Esophagus muscularis mucosa (tissue), 4 donors: ENCODE measurements at regions of chr14 and their contacts with region 1.

Region 1: GRCh38 chr14:69818757-69819191 is 21.7 kb upstream of the SLC10A1 start:
- DNase-seq: no peak
- H3K4me3 ChIP-seq: no peak overlapping the region
- H3K27ac ChIP-seq: no peak overlapping the region
- H3K4me1 ChIP-seq: peaks cover 0 to 6% (median 2%) of the 10 kb centered on the region in 4 donors
- H3K27me3 ChIP-seq: peaks cover 0 to 38% (median 3%) of the 10 kb centered on the region in 4 donors
- CTCF ChIP-seq: peak; percentile 87 to 92 (median 89)
- EP300 ChIP-seq: no peak
- POLR2A ChIP-seq: no peak

Region 2: GRCh38 chr14:69855180-69855832 is 36.5 kb after region 1 on chr14:
- intact Hi-C with region 1: no loop called
- DNase-seq: no peak
- H3K4me3 ChIP-seq: no peak overlapping the region
- H3K27ac ChIP-seq: no peak overlapping the region
- H3K4me1 ChIP-seq: no peaks in the 10 kb centered on the region
- H3K27me3 ChIP-seq: peaks cover 0 to 25% (median 0%) of the 10 kb centered on the region in 4 donors
- CTCF ChIP-seq: no peak
- EP300 ChIP-seq: no peak
- POLR2A ChIP-seq: no peak

Region 3: DNA sequence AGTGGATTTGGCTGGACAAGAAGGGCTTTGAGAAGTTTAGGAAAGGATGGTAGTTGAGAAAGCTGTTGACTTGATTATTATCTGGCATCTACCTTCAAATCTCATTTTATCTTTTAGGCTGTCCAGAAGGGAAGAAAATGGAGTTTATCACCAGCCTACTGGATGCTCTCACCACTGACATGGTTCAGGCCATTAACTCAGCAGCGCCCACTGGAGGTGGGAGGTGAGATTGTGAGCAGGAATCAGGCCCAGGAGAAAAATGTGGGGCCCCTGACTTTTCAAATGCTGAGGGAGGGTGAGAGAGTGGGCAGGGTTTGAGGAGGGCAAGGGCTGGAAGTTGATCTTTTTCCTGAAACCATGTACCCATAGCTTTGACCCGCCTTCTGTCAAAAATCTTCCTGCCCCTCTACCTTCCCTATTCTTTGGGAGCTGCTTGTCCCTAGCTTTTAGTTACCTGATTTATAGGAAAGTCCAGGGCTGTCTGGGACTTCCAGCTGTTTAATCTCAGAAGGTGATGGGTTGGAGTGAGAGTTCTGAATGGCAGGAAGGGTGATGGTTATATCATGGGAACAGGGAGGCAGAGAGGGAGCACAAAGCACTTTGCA is 194.6 kb after region 1 on chr14:
- intact Hi-C with region 1: no loop called
- DNase-seq: no peak
- H3K4me3 ChIP-seq: no peak overlapping the region
- H3K27ac ChIP-seq: no peak overlapping the region
- H3K4me1 ChIP-seq: peaks cover 0 to 13% (median 11%) of the 10 kb centered on the region in 4 donors
- H3K27me3 ChIP-seq: no peaks in the 10 kb centered on the region
- CTCF ChIP-seq: peak; percentile 19 to 43 (median 20)
- EP300 ChIP-seq: no peak
- POLR2A ChIP-seq: no peak

Region 4: DNA sequence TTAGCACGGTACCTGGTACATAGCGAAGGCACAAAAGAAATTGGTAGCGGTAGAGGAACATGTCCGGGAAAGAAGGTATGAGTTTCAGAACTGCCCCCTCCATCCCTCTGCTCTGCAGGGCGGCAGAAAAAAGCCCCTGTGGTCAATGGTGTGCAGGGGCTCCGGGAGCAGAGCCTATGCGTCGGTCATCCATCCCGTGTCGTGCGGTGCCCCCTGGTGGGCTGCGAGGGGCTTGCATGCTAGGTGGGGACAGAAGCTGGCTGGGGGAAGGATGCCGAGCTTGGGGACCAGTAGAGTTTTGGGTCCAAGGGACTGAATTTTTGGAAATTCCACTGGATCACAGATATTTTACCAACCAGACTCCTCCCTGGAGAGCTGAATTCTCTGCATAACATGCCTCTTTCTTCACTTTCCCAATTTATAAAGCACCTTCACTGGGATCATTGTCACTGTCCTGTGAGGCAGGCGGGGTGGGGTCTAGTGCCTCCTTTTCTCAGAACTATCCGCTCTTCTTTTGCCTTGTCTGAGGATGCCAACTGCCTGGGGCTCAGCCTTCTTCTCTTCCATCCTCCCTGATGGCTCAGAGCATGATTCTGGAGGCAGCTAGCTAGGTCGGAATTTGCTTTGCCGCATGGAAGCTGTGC is 209.1 kb after region 1 on chr14:
- intact Hi-C with region 1: loop called (anchors 1 kb)
- DNase-seq: no peak
- H3K4me3 ChIP-seq: no peak overlapping the region
- H3K27ac ChIP-seq: no peak overlapping the region
- H3K4me1 ChIP-seq: peaks cover 0 to 5% (median 0%) of the 10 kb centered on the region in 4 donors
- H3K27me3 ChIP-seq: peaks cover 0 to 12% (median 0%) of the 10 kb centered on the region in 4 donors
- CTCF ChIP-seq: peak; percentile 89 to 93 (median 91)
- EP300 ChIP-seq: no peak
- POLR2A ChIP-seq: no peak

Region 5: GRCh38 chr14:70317969-70318634 is 499.3 kb after region 1 on chr14:
- intact Hi-C with region 1: loop called (anchors 10 kb)
- DNase-seq: no peak
- H3K4me3 ChIP-seq: no peak overlapping the region
- H3K27ac ChIP-seq: no peak overlapping the region
- H3K4me1 ChIP-seq: no peaks in the 10 kb centered on the region
- H3K27me3 ChIP-seq: peaks cover 0 to 6% (median 0%) of the 10 kb centered on the region in 4 donors
- CTCF ChIP-seq: peak; percentile 28 to 44 (median 43)
- EP300 ChIP-seq: no peak
- POLR2A ChIP-seq: no peak

Region 6: GRCh38 chr14:70714055-70714621 is 895.4 kb after region 1 on chr14:
- intact Hi-C with region 1: loop called (anchors 10 kb)
- DNase-seq: no peak
- H3K4me3 ChIP-seq: no peak overlapping the region
- H3K27ac ChIP-seq: no peak overlapping the region
- H3K4me1 ChIP-seq: peaks cover 2 to 12% (median 9%) of the 10 kb centered on the region in 4 donors
- H3K27me3 ChIP-seq: peaks cover 0 to 19% (median 0%) of the 10 kb centered on the region in 4 donors
- CTCF ChIP-seq: peak; percentile 49 to 68 (median 58)
- EP300 ChIP-seq: no peak
- POLR2A ChIP-seq: no peak